ENCODE measurements at regions of chr9 and their contacts with region 1.

Region 1: DNA sequence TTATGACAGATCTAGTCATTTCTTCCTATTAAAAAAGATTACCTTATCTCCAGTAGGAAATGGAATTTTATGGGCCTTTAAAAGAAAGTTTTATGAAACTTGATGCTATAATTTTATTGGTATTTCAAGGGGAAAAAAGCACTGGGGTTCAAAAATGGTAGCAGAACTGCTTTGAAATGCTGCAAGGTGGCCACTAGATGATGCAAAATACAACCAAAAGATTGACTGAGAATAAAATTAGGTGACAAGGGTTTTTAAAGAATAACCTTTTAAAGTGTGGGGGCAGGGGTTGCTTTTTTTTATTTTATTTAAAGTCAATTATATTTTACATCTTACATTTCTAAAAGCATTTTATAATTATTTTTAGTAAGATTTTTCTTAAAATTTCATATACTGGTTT is 61.7 kb downstream of the KLF9 start:
- DNase-seq: no peak
- ATAC-seq: no peak

Region 2: DNA sequence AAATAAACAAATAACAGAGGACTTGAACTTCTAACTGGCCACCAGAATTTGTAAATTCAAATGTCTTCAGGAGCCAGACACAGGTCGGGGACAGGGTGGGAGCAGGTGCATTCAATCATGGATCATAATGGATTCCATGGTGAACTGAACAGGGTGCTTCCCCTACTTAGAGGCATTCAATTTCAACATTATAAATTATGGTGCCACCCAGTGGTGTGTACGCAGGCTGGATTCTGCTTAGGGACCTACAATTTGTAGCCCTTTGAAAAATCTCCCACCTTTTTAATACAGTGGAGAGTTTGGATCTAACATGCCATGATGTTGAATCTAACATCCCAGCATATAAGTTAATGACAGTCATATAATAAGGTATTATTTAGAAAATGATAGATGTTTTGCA is 39.4 kb after region 1 on chr9:
- intact Hi-C with region 1: loop called (anchors 5 kb)
- DNase-seq: no peak
- ATAC-seq: peak; percentile 45

Region 3: DNA sequence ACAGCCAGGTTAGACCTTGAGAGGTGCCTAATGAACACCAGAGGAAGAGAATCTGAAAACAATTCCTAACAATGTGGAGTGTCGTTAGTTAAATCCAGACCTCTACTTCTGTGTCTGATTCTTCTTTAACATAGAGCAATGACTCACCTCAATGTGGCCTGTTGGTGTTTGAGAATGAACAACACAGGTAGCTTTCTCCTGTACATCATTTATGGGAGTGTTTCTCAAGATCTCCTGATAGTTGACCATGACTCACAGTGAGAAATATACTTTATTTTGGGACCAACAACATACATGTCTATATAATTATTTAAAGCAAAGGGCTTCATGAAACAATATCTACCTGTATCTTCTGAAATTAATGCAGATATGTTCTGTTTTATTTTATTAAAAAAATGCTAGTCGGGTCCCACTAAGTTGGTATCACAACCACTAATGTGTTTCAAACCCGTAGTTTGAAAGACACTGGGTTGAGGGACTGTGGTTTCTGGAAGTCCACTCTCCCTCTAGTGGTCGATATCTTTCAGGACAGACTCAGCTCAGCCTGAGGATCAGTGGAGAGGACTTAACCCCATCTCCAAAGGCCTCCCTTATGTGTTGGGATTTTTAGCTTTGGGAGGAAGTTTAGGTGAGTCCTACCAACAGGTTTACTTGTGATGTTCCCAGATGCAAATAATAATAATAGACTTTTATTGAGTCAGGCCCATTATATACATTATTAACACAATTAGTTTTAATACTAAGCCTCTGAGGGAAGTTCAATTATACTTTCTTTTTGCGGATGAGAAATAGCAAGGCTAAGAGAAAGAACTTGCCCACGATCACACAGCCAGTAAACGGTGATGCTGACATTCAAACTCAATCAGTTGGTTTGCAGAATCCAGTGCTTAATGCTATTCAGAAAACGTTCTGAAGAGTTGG is 131.7 kb after region 1 on chr9:
- intact Hi-C with region 1: loop called (anchors 5 kb)
- DNase-seq: no peak
- ATAC-seq: peak; percentile 67

Measured in Right ventricle myocardium inferior (tissue), 1 donor.